Activated CD4-positive, alpha-beta T cell treated with anti-CD3 and anti-CD28 coated beads for 36 hours (primary cell): ENCODE measurements at regions of chr16 and their contacts with region 1.

Region 1: GRCh38 chr16:15888072-15888976 is at the start of gene CEP20:
- DNase-seq: peak; percentile 100
- ATAC-seq: peak; percentile 99
- H3K4me3 Mint-ChIP-seq: peak within 1 kb of the TSS; percentile 92
- H3K27ac Mint-ChIP-seq: peak within 1 kb of the TSS; percentile 99
- H3K4me1 Mint-ChIP-seq: peaks cover 28% of the 10 kb centered on the region
- H3K27me3 Mint-ChIP-seq: no peaks in the 10 kb centered on the region
- total RNA-seq, gene CEP20: 39.3 to 51.0 TPM

Region 2: DNA sequence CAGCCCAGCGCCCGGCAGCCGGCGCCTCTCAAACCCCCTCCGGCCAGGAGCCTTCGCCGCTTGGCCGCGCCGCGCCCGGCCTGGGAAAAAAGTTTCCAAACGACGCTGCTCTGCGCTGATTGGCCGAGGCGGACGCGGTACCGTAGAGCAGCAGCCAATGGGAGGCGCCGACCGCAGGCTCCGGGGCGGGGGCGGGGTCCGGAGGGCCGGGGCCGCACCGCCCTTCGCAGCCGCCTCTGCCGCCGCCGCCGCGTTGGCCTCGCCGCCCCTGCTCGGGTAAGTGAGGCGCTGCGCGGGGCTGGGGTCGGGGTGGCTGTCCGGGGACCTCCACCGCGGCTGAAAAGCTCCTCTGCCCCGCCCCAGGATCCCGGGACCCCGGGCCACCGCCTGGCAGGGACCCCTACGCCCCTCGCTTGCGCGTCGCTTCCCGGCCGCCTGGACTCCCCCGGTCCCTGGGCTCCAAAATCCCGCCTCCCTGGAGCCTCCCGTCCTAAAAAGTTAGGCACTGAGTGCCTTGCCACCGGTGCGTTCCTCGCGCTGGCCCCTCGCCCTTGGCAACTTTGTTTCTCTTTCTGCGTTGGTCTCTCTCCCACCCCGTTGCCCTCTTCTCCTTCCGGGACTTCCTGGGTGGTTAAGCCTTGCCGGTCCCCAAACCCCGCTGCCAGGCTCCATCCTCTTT is 238.2 kb before region 1 on chr16 and contains the start of gene NDE1:
- CTCF ChIA-PET with region 1: no interaction called
- POLR2A ChIA-PET with region 1: no interaction called
- intact Hi-C with region 1: loop called in 1 of 2 experiments (anchors 1 kb)
- DNase-seq: peak; percentile 94
- ATAC-seq: peak; percentile 92
- H3K4me3 Mint-ChIP-seq: peak within 1 kb of the TSS; percentile 100
- H3K27ac Mint-ChIP-seq: peak within 1 kb of the TSS; percentile 99
- H3K4me1 Mint-ChIP-seq: peaks cover 29% of the 10 kb centered on the region
- H3K27me3 Mint-ChIP-seq: no peaks in the 10 kb centered on the region
- total RNA-seq, gene NDE1: 107 to 117 TPM

Region 3: DNA sequence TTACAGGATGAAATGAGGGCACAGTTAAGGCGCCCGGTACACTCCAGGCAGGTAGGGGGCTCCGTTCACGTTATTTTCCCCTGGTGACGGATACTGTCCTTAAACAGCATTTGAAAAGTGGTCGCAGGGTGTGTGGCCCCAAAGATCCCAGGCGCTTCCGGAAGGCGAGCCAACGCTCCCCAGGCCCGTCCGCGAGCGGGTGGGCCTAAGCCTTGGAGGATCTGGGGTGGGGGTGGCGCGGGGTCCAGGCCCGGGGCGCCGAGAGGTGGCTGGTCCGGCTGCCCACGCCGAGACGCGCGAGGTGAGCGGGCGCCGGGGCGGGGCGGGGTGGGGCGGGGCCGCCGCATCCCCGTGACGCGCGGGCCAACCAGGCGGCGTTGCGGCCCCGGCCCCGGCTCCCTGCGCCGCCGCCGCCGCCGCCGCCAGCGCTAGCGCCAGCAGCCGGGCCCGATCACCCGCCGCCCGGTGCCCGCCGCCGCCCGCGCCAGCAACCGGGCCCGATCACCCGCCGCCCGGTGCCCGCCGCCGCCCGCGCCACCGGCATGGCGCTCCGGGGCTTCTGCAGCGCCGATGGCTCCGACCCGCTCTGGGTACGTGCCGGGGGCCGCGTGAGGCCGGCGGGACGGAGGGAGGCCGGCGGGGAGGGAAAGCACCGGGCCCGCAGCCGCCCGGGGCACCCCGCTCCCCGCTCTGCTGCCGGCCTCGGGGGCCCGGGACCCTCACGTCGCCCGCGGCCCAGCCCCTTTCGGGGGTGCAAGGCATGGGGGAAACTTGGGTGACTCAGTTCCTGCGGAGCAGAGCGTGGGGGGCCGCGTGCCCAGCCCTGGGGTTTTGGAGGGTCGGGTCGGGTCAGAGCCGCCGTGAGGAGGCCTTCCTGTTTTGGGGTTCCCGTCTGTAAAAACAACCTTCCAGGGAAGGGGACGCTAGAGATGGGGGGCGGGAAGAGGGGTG is 61.2 kb after region 1 on chr16 and contains the start of gene ABCC1:
- CTCF ChIA-PET with region 1: interaction called, 3 read pairs
- POLR2A ChIA-PET with region 1: interaction called, 5 read pairs
- intact Hi-C with region 1: loop called (anchors 1 to 2 kb)
- DNase-seq: peak; percentile 73
- ATAC-seq: peak; percentile 69
- H3K4me3 Mint-ChIP-seq: peak within 1 kb of the TSS; percentile 95
- H3K27ac Mint-ChIP-seq: peak within 1 kb of the TSS; percentile 100
- H3K4me1 Mint-ChIP-seq: peaks cover 51% of the 10 kb centered on the region
- H3K27me3 Mint-ChIP-seq: no peaks in the 10 kb centered on the region
- total RNA-seq, gene ABCC1: 57.8 to 65.1 TPM

Region 4: GRCh38 chr16:15961060-15961511 is 72.8 kb after region 1 on chr16:
- CTCF ChIA-PET with region 1: interaction called, 4 read pairs
- POLR2A ChIA-PET with region 1: interaction called, 6 read pairs
- intact Hi-C with region 1: loop called in 1 of 2 experiments (anchors 1 kb)
- DNase-seq: peak; percentile 85
- ATAC-seq: peak; percentile 88
- H3K4me3 Mint-ChIP-seq: peak overlapping the region; percentile 75
- H3K27ac Mint-ChIP-seq: peak overlapping the region; percentile 99
- H3K4me1 Mint-ChIP-seq: peaks cover 81% of the 10 kb centered on the region
- H3K27me3 Mint-ChIP-seq: no peaks in the 10 kb centered on the region

Region 5: GRCh38 chr16:16025214-16025968 is 137.1 kb after region 1 on chr16:
- CTCF ChIA-PET with region 1: no interaction called
- POLR2A ChIA-PET with region 1: interaction called, 5 read pairs
- intact Hi-C with region 1: loop called (anchors 1 to 5 kb)
- DNase-seq: peak; percentile 78
- ATAC-seq: peak; percentile 91
- H3K4me3 Mint-ChIP-seq: peak overlapping the region; percentile 30
- H3K27ac Mint-ChIP-seq: peak overlapping the region; percentile 78
- H3K4me1 Mint-ChIP-seq: peaks cover 36% of the 10 kb centered on the region
- H3K27me3 Mint-ChIP-seq: no peaks in the 10 kb centered on the region

Region 6: GRCh38 chr16:16033208-16033717 is 144.9 kb after region 1 on chr16:
- CTCF ChIA-PET with region 1: no interaction called
- POLR2A ChIA-PET with region 1: no interaction called
- intact Hi-C with region 1: loop called (anchors 2 to 5 kb)
- DNase-seq: peak; percentile 29
- ATAC-seq: peak; percentile 86
- H3K4me3 Mint-ChIP-seq: no peak overlapping the region
- H3K27ac Mint-ChIP-seq: peak overlapping the region; percentile 38
- H3K4me1 Mint-ChIP-seq: peaks cover 15% of the 10 kb centered on the region
- H3K27me3 Mint-ChIP-seq: no peaks in the 10 kb centered on the region

Region 7: GRCh38 chr16:16127469-16128116 is 239.3 kb after region 1 on chr16:
- CTCF ChIA-PET with region 1: no interaction called
- POLR2A ChIA-PET with region 1: interaction called, 3 read pairs
- intact Hi-C with region 1: loop called in 1 of 2 experiments (anchors 5 kb)
- DNase-seq: peak; percentile 83
- ATAC-seq: peak; percentile 85
- H3K4me3 Mint-ChIP-seq: no peak overlapping the region
- H3K27ac Mint-ChIP-seq: peak overlapping the region; percentile 33
- H3K4me1 Mint-ChIP-seq: peaks cover 3% of the 10 kb centered on the region
- H3K27me3 Mint-ChIP-seq: no peaks in the 10 kb centered on the region